Endothelial cell of umbilical vein (primary cell): ENCODE measurements at regions of chr2 and their contacts with region 1.

Region 1: DNA sequence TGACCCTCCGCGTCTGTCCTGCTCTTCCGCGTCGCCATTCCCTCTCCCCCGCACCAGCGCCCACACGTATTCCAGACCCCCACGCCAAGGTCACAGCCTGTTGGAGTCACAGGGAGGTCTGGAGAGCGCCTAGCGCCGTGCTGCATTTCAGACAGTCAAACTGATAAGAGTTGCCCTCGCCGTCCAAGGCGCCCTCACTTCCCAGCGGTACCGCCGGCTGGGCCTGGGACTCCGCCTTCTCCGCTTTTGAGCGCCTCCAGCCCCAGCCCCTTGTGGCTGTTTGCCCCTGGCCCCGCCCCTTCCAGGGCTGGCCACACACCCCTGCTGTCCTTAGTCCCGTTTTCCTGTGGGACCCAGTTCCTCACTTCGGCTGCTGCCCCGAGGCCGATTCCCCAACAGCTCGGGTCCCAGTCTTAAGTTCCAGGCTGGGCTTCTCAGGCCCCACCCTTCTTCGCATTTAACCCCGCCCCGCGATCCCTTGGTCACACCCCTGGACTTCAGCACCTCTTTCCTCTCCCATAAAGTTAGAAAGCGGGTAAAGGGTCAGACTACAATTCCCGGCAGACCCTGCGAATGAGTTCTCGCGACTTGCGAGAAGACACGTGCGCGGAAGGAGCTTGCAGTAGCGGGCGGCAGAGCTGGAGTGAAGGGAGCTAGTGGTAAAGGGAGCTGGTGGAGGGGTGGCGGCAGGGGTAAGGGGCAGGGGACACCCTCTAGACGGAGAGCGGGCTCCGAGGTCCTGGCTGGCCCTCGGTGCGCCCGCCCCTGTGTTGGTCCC is at the start of gene GMPPA:
- DNase-seq: peak; percentile 99
- H3K4me3 ChIP-seq: peak within 1 kb of the TSS; percentile 72 to 87 (median 76)
- H3K27ac ChIP-seq: peak within 1 kb of the TSS; percentile 66
- H3K4me1 ChIP-seq: peaks cover 12% of the 10 kb centered on the region
- H3K27me3 ChIP-seq: peaks cover 31 to 36% of the 10 kb centered on the region in 2 experiments
- CTCF ChIP-seq: peak in 1 of 2 donors; percentile 10
- POLR2A ChIP-seq: peak; percentile 87
- total RNA-seq, gene GMPPA: 34.1 and 39.1 TPM in 2 replicates

Region 2: GRCh38 chr2:219402665-219403515 is 95.6 kb before region 1 on chr2:
- CTCF ChIA-PET with region 1: interaction called, 41 read pairs
- POLR2A ChIA-PET with region 1: interaction called, 3 read pairs
- dilution Hi-C with region 1: no loop called
- intact Hi-C with region 1: loop called (anchors 1 kb)
- DNase-seq: peak; percentile 64
- H3K4me3 ChIP-seq: no peak overlapping the region
- H3K27ac ChIP-seq: no peak overlapping the region
- H3K4me1 ChIP-seq: peaks cover 2% of the 10 kb centered on the region
- H3K27me3 ChIP-seq: peaks cover 0 to 1% of the 10 kb centered on the region in 2 experiments
- CTCF ChIP-seq: peak; percentile 90 to 91
- POLR2A ChIP-seq: no peak

Region 3: GRCh38 chr2:219475697-219476651 is 22.5 kb before region 1 on chr2:
- CTCF ChIA-PET with region 1: interaction called, 7 read pairs
- POLR2A ChIA-PET with region 1: no interaction called
- dilution Hi-C with region 1: no loop called
- intact Hi-C with region 1: loop called (anchors 1 kb)
- DNase-seq: peak; percentile 45
- H3K4me3 ChIP-seq: no peak overlapping the region
- H3K27ac ChIP-seq: no peak overlapping the region
- H3K4me1 ChIP-seq: no peaks in the 10 kb centered on the region
- H3K27me3 ChIP-seq: peaks cover 0 to 2% of the 10 kb centered on the region in 2 experiments
- CTCF ChIP-seq: peak; percentile 80 to 91
- POLR2A ChIP-seq: no peak

Region 4: GRCh38 chr2:219509780-219510511 is 11.5 kb after region 1 on chr2:
- CTCF ChIA-PET with region 1: interaction called, 151 read pairs
- POLR2A ChIA-PET with region 1: interaction called, 20 read pairs
- dilution Hi-C with region 1: no loop called
- intact Hi-C with region 1: loop called (anchors 1 kb)
- DNase-seq: peak; percentile 60
- H3K4me3 ChIP-seq: peak overlapping the region in 1 of 3 experiments; percentile 1
- H3K27ac ChIP-seq: no peak overlapping the region
- H3K4me1 ChIP-seq: no peaks in the 10 kb centered on the region
- H3K27me3 ChIP-seq: peaks cover 42 to 43% of the 10 kb centered on the region in 2 experiments
- CTCF ChIP-seq: peak; percentile 68 to 84
- POLR2A ChIP-seq: no peak

Region 5: DNA sequence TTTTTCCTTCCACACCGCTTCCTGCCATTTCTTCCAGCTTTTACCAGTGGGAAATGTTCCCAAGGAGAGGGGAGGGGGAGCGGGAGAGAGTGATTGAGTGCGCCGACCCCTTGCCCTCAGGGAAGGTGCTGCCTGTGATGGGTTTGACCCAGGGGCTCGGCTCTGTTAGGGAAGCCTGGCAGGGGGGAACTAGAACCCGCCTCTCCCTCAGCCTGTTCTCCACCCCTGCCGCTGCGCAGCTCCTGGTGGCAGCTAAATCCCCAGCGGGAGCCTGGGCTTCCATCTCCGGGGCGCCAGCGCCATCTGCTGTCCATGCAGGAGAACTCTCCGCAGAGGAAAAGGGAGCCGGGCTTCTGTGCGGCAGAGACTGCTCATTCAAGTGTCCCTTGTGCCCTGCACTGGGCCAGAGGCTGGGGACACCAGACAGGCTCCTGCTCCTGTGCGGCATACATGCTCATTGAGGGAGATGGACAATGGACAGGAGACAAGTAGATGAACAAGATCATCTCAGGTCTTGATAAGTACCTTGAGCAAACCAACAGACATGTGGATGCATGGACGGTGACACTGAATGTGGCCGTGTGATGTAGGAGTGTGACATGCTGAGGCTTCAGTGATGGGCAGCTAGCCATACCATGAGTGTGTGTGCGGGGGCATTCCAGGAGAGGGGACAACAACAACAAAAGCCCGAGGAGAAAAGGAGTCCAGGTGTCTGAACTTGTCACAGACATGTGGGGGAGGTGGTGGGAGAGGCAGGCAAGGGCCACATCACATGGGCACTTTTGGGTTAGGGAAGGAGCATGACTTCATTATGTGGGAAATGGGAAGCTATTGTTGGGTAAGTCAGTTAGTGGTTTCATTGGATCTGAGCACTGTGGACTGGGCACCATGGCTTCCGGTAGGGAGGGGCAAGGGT is 31.8 kb after region 1 on chr2:
- CTCF ChIA-PET with region 1: interaction called, 731 read pairs
- POLR2A ChIA-PET with region 1: interaction called, 5 read pairs
- dilution Hi-C with region 1: no loop called
- intact Hi-C with region 1: loop called (anchors 1 kb)
- DNase-seq: peak; percentile 79
- H3K4me3 ChIP-seq: no peak overlapping the region
- H3K27ac ChIP-seq: no peak overlapping the region
- H3K4me1 ChIP-seq: no peaks in the 10 kb centered on the region
- H3K27me3 ChIP-seq: peaks cover 30 to 38% of the 10 kb centered on the region in 2 experiments
- CTCF ChIP-seq: peak; percentile 90 to 94
- POLR2A ChIP-seq: no peak

Region 6: DNA sequence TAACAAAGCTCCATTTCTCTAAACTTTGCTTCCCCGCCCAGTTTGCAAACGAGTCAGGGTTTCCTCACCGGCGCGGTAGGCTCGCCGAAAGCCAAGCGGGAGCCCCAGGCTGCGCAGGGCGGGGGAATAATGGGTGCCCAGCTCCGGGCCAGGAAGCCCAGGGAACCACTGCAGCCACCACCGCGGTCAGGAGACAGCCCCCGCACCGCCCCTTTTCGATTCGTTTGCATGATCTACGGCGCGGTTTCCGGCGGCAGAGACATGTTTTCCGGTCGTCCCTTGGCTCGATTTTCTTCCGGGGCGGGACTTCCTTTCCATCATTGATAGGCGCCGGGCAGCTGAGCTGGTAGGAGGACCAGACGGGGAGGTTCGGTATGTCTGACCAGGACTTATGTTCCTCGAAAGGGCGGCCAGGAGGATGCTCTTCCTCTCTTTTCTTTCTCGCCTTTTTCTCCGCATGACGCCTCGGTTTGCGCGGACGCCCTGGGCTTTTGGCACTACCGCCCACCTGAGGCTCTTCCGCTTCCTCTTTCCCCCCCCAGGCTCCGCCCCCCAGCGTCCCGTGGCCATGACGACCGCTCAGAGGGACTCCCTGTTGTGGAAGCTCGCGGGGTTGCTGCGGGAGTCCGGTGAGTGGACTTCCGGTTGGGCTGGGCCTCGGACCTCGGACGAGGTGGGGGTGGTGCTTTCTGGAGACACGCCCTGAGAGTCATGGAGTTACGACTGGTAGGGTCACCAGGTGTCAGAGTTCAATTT is 99.3 kb after region 1 on chr2 and contains the start of gene STK11IP:
- CTCF ChIA-PET with region 1: interaction called, 4 read pairs
- POLR2A ChIA-PET with region 1: no interaction called
- dilution Hi-C with region 1: no loop called
- intact Hi-C with region 1: loop called (anchors 1 kb)
- DNase-seq: peak; percentile 95
- H3K4me3 ChIP-seq: peak within 1 kb of the TSS; percentile 47 to 76 (median 67)
- H3K27ac ChIP-seq: peak within 1 kb of the TSS; percentile 86
- H3K4me1 ChIP-seq: peaks cover 12% of the 10 kb centered on the region
- H3K27me3 ChIP-seq: no peaks in the 10 kb centered on the region
- CTCF ChIP-seq: no peak
- POLR2A ChIP-seq: peak; percentile 97
- total RNA-seq, gene STK11IP: 19.2 and 20.2 TPM in 2 replicates

Region 7: DNA sequence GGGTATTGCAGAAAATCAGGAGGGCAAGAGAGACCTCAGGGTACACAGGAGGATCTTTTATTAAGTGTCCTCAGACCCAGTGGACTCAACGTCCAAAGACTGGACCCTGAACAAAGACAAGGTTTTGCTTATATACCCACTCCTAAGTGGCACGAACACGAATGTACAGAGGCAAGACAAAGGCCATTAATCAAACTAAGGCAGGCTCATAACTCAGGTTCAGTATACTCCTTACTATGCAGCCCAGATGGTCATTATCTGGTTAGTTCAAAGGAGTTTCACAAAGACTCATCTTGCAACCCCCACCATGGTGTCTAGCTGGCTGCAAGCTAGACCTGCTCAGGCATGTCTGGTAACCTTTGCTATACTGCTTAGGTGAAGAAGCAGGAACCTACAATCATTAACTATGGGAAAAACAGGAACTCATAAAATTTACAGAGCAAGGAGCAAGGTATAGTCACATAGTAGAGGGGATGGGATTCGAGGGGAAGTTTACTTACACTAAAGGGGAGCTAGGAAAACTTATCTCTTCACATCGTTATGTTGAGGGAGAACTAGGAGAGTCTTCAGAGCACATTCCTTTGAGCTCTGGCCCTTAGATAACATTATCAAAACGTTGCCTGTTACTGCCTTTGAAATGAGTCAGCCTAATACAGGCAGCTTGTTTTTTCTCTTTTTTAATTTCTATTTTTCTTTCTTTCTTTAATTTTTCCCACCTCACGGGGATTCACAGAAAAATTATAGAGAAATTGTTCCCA is 162.9 kb after region 1 on chr2:
- CTCF ChIA-PET with region 1: no interaction called
- POLR2A ChIA-PET with region 1: no interaction called
- dilution Hi-C with region 1: no loop called
- intact Hi-C with region 1: no loop called
- DNase-seq: no peak
- H3K4me3 ChIP-seq: no peak overlapping the region
- H3K27ac ChIP-seq: no peak overlapping the region
- H3K4me1 ChIP-seq: no peaks in the 10 kb centered on the region
- H3K27me3 ChIP-seq: peaks cover 0 to 1% of the 10 kb centered on the region in 2 experiments
- CTCF ChIP-seq: no peak
- POLR2A ChIP-seq: no peak